Naive thymus-derived CD4-positive, alpha-beta T cell (primary cell): ENCODE measurements at regions of chr6 and their contacts with region 1.

Region 1: GRCh38 chr6:17584241-17584803 is 15.8 kb upstream of the FAM8A1 start:
- DNase-seq: peak in 7 of 9 donors; percentile 36 to 67 (median 54)
- ATAC-seq: peak; percentile 74
- H3K4me3 ChIP-seq: no peak overlapping the region
- H3K4me3 Mint-ChIP-seq: peak overlapping the region in 3 of 10 donors; percentile 1 to 46 (median 8)
- H3K27ac ChIP-seq: no peak overlapping the region
- H3K27ac Mint-ChIP-seq: peak overlapping the region in 7 of 9 donors; percentile 12 to 90 (median 47)
- H3K4me1 ChIP-seq: peaks cover 0 to 5% of the 10 kb centered on the region in 2 donors
- H3K4me1 Mint-ChIP-seq: peaks cover 10 to 21% (median 12%) of the 10 kb centered on the region in 7 donors
- H3K27me3 ChIP-seq: no peaks in the 10 kb centered on the region
- H3K27me3 Mint-ChIP-seq: peaks cover 0 to 17% (median 0%) of the 10 kb centered on the region in 5 donors

Region 2: GRCh38 chr6:17156112-17156921 is 428.0 kb before region 1 on chr6:
- CTCF ChIA-PET with region 1: interaction called, 7 read pairs
- POLR2A ChIA-PET with region 1: no interaction called
- intact Hi-C with region 1: loop called (anchors 1 kb)
- DNase-seq: peak; percentile 14 to 64 (median 50)
- ATAC-seq: peak; percentile 59
- H3K4me3 ChIP-seq: no peak overlapping the region
- H3K4me3 Mint-ChIP-seq: no peak overlapping the region
- H3K27ac ChIP-seq: no peak overlapping the region
- H3K27ac Mint-ChIP-seq: no peak overlapping the region
- H3K4me1 ChIP-seq: no peaks in the 10 kb centered on the region
- H3K4me1 Mint-ChIP-seq: no peaks in the 10 kb centered on the region
- H3K27me3 ChIP-seq: no peaks in the 10 kb centered on the region
- H3K27me3 Mint-ChIP-seq: peaks cover 10 to 20% (median 12%) of the 10 kb centered on the region in 5 donors

Region 3: GRCh38 chr6:17628873-17629272 is 44.6 kb after region 1 on chr6:
- CTCF ChIA-PET with region 1: interaction called, 4 read pairs
- POLR2A ChIA-PET with region 1: no interaction called
- intact Hi-C with region 1: loop called in 1 of 2 experiments (anchors 1 kb)
- DNase-seq: no peak
- ATAC-seq: no peak
- H3K4me3 ChIP-seq: no peak overlapping the region
- H3K4me3 Mint-ChIP-seq: no peak overlapping the region
- H3K27ac ChIP-seq: no peak overlapping the region
- H3K27ac Mint-ChIP-seq: peak overlapping the region in 8 of 9 donors; percentile 2 to 73 (median 28)
- H3K4me1 ChIP-seq: peaks cover 9 to 17% of the 10 kb centered on the region in 2 donors
- H3K4me1 Mint-ChIP-seq: peaks cover 28 to 50% (median 41%) of the 10 kb centered on the region in 7 donors
- H3K27me3 ChIP-seq: no peaks in the 10 kb centered on the region
- H3K27me3 Mint-ChIP-seq: no peaks in the 10 kb centered on the region

Region 4: DNA sequence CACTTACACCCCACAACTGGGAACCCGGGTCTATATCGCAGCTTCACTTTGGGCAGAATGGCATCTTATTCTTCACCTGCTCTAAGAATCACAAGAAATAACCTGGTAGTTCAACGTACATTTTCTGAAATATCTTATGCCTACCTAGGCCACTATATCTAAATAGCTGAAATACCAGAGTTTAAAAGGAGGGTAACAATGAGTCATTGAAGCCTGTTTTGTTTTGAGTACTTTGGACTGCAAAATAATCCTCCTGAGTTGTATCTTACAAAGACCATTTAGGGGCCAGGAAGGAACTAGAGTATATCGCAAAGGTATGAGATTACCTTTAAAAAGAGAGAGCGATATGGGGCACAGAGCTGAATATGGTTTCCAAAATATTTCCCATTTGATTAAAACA is 219.1 kb after region 1 on chr6:
- CTCF ChIA-PET with region 1: interaction called, 40 read pairs
- POLR2A ChIA-PET with region 1: no interaction called
- intact Hi-C with region 1: loop called (anchors 1 kb)
- DNase-seq: no peak
- ATAC-seq: no peak
- H3K4me3 ChIP-seq: no peak overlapping the region
- H3K4me3 Mint-ChIP-seq: no peak overlapping the region
- H3K27ac ChIP-seq: no peak overlapping the region
- H3K27ac Mint-ChIP-seq: no peak overlapping the region
- H3K4me1 ChIP-seq: no peaks in the 10 kb centered on the region
- H3K4me1 Mint-ChIP-seq: peaks cover 0 to 5% (median 0%) of the 10 kb centered on the region in 7 donors
- H3K27me3 ChIP-seq: no peaks in the 10 kb centered on the region
- H3K27me3 Mint-ChIP-seq: peaks cover 4 to 21% (median 6%) of the 10 kb centered on the region in 5 donors

Region 5: GRCh38 chr6:18122124-18123093 is 538.1 kb after region 1 on chr6 and contains the start of gene NHLRC1:
- CTCF ChIA-PET with region 1: no interaction called
- POLR2A ChIA-PET with region 1: no interaction called
- intact Hi-C with region 1: loop called in 1 of 2 experiments (anchors 1 kb)
- DNase-seq: peak; percentile 43 to 68 (median 65)
- ATAC-seq: peak; percentile 100
- H3K4me3 ChIP-seq: peak within 1 kb of the TSS; percentile 63
- H3K4me3 Mint-ChIP-seq: peak within 1 kb of the TSS; percentile 81 to 90 (median 87)
- H3K27ac ChIP-seq: no peak within 1 kb of the TSS
- H3K27ac Mint-ChIP-seq: peak within 1 kb of the TSS; percentile 6 to 87 (median 53)
- H3K4me1 ChIP-seq: peaks cover 5 to 8% of the 10 kb centered on the region in 2 donors
- H3K4me1 Mint-ChIP-seq: peaks cover 0 to 15% (median 8%) of the 10 kb centered on the region in 7 donors
- H3K27me3 ChIP-seq: no peaks in the 10 kb centered on the region
- H3K27me3 Mint-ChIP-seq: peaks cover 0 to 65% (median 7%) of the 10 kb centered on the region in 5 donors
- total RNA-seq, gene NHLRC1: 0.39 to 1.4 (median 0.61) TPM

Region 6: GRCh38 chr6:18240230-18240629 is 655.9 kb after region 1 on chr6:
- CTCF ChIA-PET with region 1: no interaction called
- POLR2A ChIA-PET with region 1: no interaction called
- intact Hi-C with region 1: no loop called
- DNase-seq: no peak
- ATAC-seq: no peak
- H3K4me3 ChIP-seq: no peak overlapping the region
- H3K4me3 Mint-ChIP-seq: no peak overlapping the region
- H3K27ac ChIP-seq: peak overlapping the region; percentile 5
- H3K27ac Mint-ChIP-seq: peak overlapping the region in 4 of 9 donors; percentile 5 to 86 (median 64)
- H3K4me1 ChIP-seq: no peaks in the 10 kb centered on the region
- H3K4me1 Mint-ChIP-seq: peaks cover 4 to 42% (median 35%) of the 10 kb centered on the region in 7 donors
- H3K27me3 ChIP-seq: no peaks in the 10 kb centered on the region
- H3K27me3 Mint-ChIP-seq: no peaks in the 10 kb centered on the region

Region 7: DNA sequence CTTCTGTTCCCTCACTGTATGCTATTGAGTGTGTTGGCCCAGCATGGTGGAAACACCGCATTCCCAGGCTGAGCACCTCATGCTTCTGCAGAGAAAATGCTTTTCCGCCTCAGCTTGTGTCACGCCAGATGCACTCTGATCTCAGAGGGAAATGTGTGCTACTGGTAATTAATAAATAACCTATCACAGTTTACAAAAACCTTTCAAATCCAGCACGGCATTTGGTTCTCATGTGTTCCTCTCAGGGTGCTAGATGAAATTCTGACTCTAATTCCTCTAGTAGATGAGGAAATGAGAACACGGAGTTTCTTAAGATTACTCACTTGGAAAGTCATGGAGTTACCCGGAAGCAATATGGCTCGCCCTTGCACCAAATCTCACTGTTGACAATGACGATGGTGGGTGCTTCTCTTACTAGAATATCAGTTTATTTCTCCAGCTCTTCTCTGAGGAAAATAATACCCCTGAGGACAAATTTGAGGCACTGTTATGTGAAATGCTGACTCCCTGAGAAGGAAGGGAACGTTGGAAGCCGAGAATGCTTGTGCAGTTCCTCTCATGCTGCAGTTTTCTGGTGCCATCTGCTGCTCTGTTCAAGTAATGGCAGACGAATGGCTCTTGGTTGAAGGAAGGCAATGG is 919.4 kb after region 1 on chr6:
- CTCF ChIA-PET with region 1: no interaction called
- POLR2A ChIA-PET with region 1: no interaction called
- intact Hi-C with region 1: loop called in 1 of 2 experiments (anchors 10 kb)
- DNase-seq: peak in 6 of 9 donors; percentile 19 to 54 (median 38)
- ATAC-seq: peak; percentile 63
- H3K4me3 ChIP-seq: no peak overlapping the region
- H3K4me3 Mint-ChIP-seq: peak overlapping the region in 2 of 10 donors; percentile 29 to 50
- H3K27ac ChIP-seq: no peak overlapping the region
- H3K27ac Mint-ChIP-seq: no peak overlapping the region
- H3K4me1 ChIP-seq: no peaks in the 10 kb centered on the region
- H3K4me1 Mint-ChIP-seq: peaks cover 0 to 4% (median 0%) of the 10 kb centered on the region in 7 donors
- H3K27me3 ChIP-seq: no peaks in the 10 kb centered on the region
- H3K27me3 Mint-ChIP-seq: peaks cover 0 to 7% (median 4%) of the 10 kb centered on the region in 5 donors

Region 8: GRCh38 chr6:19127087-19127486 is 1542.8 kb after region 1 on chr6:
- CTCF ChIA-PET with region 1: no interaction called
- POLR2A ChIA-PET with region 1: no interaction called
- intact Hi-C with region 1: no loop called
- DNase-seq: no peak
- ATAC-seq: no peak
- H3K4me3 ChIP-seq: no peak overlapping the region
- H3K4me3 Mint-ChIP-seq: no peak overlapping the region
- H3K27ac ChIP-seq: no peak overlapping the region
- H3K27ac Mint-ChIP-seq: no peak overlapping the region
- H3K4me1 ChIP-seq: no peaks in the 10 kb centered on the region
- H3K4me1 Mint-ChIP-seq: no peaks in the 10 kb centered on the region
- H3K27me3 ChIP-seq: no peaks in the 10 kb centered on the region
- H3K27me3 Mint-ChIP-seq: no peaks in the 10 kb centered on the region